AG04450 (cell line): ENCODE measurements at regions of chr11 and their contacts with region 1.

Region 1: GRCh38 chr11:74255741-74256369 is 55.6 kb downstream of the P4HA3 start:
- DNase-seq: no peak
- H3K4me3 ChIP-seq: no peak overlapping the region
- H3K27ac ChIP-seq: no peak overlapping the region
- H3K27me3 ChIP-seq: no peaks in the 10 kb centered on the region
- CTCF ChIP-seq: peak; percentile 96

Region 2: DNA sequence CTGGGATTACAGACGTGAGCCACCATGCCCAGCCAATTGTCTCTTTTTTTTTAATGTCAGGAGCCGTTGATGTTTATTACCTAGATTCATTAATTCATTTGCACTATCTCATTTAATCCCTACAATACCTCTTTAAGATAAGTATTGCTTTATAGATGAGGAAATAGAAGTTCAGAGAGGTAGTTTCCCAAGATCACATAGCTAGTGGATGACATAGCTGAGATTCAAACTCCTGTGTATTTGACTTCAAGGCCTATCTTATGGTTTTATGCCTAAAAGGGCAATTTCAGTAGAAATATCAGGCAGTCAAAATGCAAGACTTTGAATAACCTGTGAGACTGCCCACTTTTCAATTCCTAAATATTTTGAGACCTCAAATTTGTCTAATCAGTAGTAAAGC is 18.3 kb before region 1 on chr11:
- CTCF ChIA-PET with region 1: interaction called, 11 read pairs
- POLR2A ChIA-PET with region 1: no interaction called
- DNase-seq: no peak
- H3K4me3 ChIP-seq: no peak overlapping the region
- H3K27ac ChIP-seq: no peak overlapping the region
- H3K27me3 ChIP-seq: no peaks in the 10 kb centered on the region
- CTCF ChIP-seq: no peak

Region 3: GRCh38 chr11:74278721-74279161 is 22.9 kb after region 1 on chr11:
- CTCF ChIA-PET with region 1: interaction called, 13 read pairs
- POLR2A ChIA-PET with region 1: interaction called, 4 read pairs
- DNase-seq: peak; percentile 98
- H3K4me3 ChIP-seq: no peak overlapping the region
- H3K27ac ChIP-seq: peak overlapping the region; percentile 98
- H3K27me3 ChIP-seq: no peaks in the 10 kb centered on the region
- CTCF ChIP-seq: no peak

Region 4: DNA sequence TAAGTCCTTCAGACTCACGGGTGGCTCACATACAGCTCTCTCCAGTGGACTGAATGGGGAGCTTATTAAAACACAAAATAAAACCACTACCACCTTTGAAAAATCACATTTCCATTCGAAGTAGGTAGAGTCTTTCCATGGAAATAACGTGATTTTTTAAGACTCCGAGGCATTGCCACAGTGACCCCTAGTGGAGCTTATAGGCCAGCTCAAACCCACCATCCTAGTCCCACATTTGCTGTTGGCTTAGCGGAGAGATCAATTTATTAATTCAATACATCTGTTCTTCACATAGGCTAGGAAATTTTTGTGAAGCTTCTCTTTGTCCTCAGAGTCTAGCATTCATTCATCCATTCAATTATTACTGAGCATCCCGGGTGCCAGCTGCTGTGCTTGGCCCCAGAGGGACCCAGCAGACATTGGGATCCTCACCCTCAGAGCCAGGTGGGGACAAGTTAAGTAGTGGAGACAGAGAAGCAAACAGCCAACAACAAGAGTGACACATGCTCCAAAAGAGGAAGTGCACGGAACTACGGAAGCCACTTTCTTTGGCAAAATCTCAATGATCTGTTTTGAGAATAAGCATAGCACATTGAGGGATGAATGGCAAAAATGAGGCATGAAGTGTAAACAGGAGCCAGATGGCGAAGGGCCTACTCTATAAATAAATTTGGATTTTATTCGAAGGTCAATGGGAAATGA is 65.8 kb after region 1 on chr11:
- CTCF ChIA-PET with region 1: interaction called, 23 read pairs
- POLR2A ChIA-PET with region 1: interaction called, 6 read pairs
- DNase-seq: no peak
- H3K4me3 ChIP-seq: no peak overlapping the region
- H3K27ac ChIP-seq: no peak overlapping the region
- H3K27me3 ChIP-seq: no peaks in the 10 kb centered on the region
- CTCF ChIP-seq: peak; percentile 68

Region 5: GRCh38 chr11:74398244-74399159 is 142.6 kb after region 1 on chr11 and contains the start of gene PGM2L1:
- CTCF ChIA-PET with region 1: interaction called, 10 read pairs
- POLR2A ChIA-PET with region 1: interaction called, 8 read pairs
- DNase-seq: peak; percentile 70
- H3K4me3 ChIP-seq: peak within 1 kb of the TSS; percentile 93
- H3K27ac ChIP-seq: peak within 1 kb of the TSS; percentile 68
- H3K27me3 ChIP-seq: no peaks in the 10 kb centered on the region
- CTCF ChIP-seq: no peak
- polyA plus RNA-seq, gene PGM2L1: 1.7 and 2.6 TPM in 2 replicates

Region 6: GRCh38 chr11:74449369-74449931 is 193.6 kb after region 1 on chr11:
- CTCF ChIA-PET with region 1: interaction called, 172 read pairs
- POLR2A ChIA-PET with region 1: interaction called, 4 read pairs
- DNase-seq: peak; percentile 55
- H3K4me3 ChIP-seq: no peak overlapping the region
- H3K27ac ChIP-seq: no peak overlapping the region
- H3K27me3 ChIP-seq: peaks cover 7% of the 10 kb centered on the region
- CTCF ChIP-seq: peak; percentile 82